H1 (cell line): ENCODE measurements at regions of chr12 and their contacts with region 1.

Region 1: DNA sequence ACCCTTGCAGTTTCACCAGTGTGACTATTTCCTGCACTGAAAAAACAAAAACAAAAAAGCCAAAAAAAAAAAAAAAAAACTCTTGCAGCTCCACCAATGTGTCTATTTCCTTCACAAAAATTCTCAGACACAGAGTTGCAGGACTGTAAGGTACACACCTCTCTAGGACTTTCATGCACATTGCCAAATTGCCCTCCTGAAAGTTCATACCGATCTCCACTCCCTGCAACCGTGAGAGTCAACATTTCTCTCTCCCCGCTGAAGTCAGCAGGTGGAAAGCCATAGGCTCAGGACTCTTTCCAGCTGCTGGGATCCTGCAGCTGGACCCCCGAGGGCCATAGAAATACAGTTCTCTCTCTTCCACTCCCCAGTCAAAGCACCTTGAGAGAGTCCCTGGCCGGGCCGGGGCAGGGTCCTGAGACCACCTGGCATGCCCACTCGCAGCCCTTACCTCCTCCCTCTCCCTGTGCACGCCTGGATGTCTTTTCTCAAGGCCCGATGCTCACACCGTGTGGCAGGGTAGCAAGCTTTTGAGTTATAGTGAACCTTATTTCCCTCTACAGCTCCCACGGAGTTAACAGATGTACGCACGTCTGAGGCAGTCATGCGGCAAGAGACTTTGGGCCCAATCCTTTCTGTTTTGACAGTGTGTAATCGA is 23.6 kb downstream of the MMAB start:
- DNase-seq: no peak
- H3K4me3 ChIP-seq: no peak overlapping the region
- H3K27ac ChIP-seq: no peak overlapping the region
- H3K4me1 ChIP-seq: no peaks in the 10 kb centered on the region
- H3K27me3 ChIP-seq: no peaks in the 10 kb centered on the region; a peak in 3 of 7 replicates
- CTCF ChIP-seq: no peak
- EP300 ChIP-seq: no peak
- POLR2A ChIP-seq: no peak
- RAD21 ChIP-seq: no peak

Region 2: GRCh38 chr12:109510196-109510595 is 39.5 kb before region 1 on chr12:
- CTCF ChIA-PET with region 1: no interaction called
- POLR2A ChIA-PET with region 1: no interaction called
- DNase-seq: no peak
- H3K4me3 ChIP-seq: no peak overlapping the region
- H3K27ac ChIP-seq: no peak overlapping the region
- H3K4me1 ChIP-seq: no peaks in the 10 kb centered on the region
- H3K27me3 ChIP-seq: no peaks in the 10 kb centered on the region
- CTCF ChIP-seq: no peak
- EP300 ChIP-seq: no peak
- POLR2A ChIP-seq: no peak
- RAD21 ChIP-seq: no peak

Region 3: GRCh38 chr12:109573029-109573913 is 23.5 kb after region 1 on chr12 and contains the starts of genes MMAB and MVK:
- CTCF ChIA-PET with region 1: interaction called, 4 read pairs
- POLR2A ChIA-PET with region 1: interaction called, 13 read pairs
- DNase-seq: peak; percentile 96 to 99
- H3K4me3 ChIP-seq: peak within 1 kb of the TSS; percentile 80 to 87 (median 81)
- H3K27ac ChIP-seq: peak within 1 kb of the TSS; percentile 91
- H3K4me1 ChIP-seq: peaks cover 2 to 4% (median 3%) of the 10 kb centered on the region in 4 experiments; a peak in 4 of 7 replicates
- H3K27me3 ChIP-seq: no peaks in the 10 kb centered on the region
- CTCF ChIP-seq: peak in 1 of 3 experiments; percentile 8; a peak in 1 of 4 replicates
- EP300 ChIP-seq: no peak
- POLR2A ChIP-seq: peak in 1 of 2 experiments; percentile 81; a peak in 2 of 3 replicates
- RAD21 ChIP-seq: no peak
- total RNA-seq, gene MMAB: 17.1 and 18.5 TPM in 2 replicates
- total RNA-seq, gene MVK: 15.7 and 17.0 TPM in 2 replicates

Region 4: DNA sequence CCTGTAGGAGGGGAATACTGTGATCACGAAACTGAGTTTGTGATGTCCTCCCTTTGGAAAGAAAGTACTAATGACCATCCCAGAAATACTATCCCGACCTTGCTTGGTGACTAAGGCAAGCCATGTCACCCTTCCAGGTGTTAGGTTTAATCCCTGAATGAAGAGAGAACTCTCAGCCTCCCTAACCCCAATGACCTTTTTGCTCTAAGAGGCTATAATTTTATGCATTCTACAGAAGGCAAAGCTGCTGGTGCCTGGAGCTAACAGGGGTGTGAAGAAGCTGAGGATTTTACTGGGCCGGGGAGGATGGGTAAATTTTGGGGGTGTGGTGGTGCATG is 506.4 kb after region 1 on chr12:
- CTCF ChIA-PET with region 1: no interaction called
- POLR2A ChIA-PET with region 1: no interaction called
- DNase-seq: no peak
- H3K4me3 ChIP-seq: no peak overlapping the region
- H3K27ac ChIP-seq: no peak overlapping the region
- H3K4me1 ChIP-seq: no peaks in the 10 kb centered on the region
- H3K27me3 ChIP-seq: no peaks in the 10 kb centered on the region
- CTCF ChIP-seq: no peak
- EP300 ChIP-seq: no peak
- POLR2A ChIP-seq: no peak
- RAD21 ChIP-seq: no peak